Psoas muscle (tissue), 8 donors: ENCODE measurements at regions of chr1 and their contacts with region 1.

Region 1: GRCh38 chr1:113042285-113043143 is 30.5 kb upstream of the LRIG2 start:
- DNase-seq: peak; percentile 71 to 82
- ATAC-seq: peak; percentile 91 to 97 (median 94)
- H3K4me3 ChIP-seq: no peak overlapping the region
- H3K27ac ChIP-seq: no peak overlapping the region
- H3K4me1 ChIP-seq: peaks cover 7% of the 10 kb centered on the region
- H3K27me3 ChIP-seq: no peaks in the 10 kb centered on the region
- CTCF ChIP-seq: peak; percentile 66

Region 2: GRCh38 chr1:112803906-112804762 is 238.4 kb before region 1 on chr1:
- intact Hi-C with region 1: loop called in 1 of 2 experiments (anchors 10 kb)
- DNase-seq: peak; percentile 56 to 84
- ATAC-seq: peak; percentile 78 to 85 (median 83)
- H3K4me3 ChIP-seq: no peak overlapping the region
- H3K27ac ChIP-seq: no peak overlapping the region
- H3K4me1 ChIP-seq: peaks cover 8% of the 10 kb centered on the region
- H3K27me3 ChIP-seq: no peaks in the 10 kb centered on the region
- CTCF ChIP-seq: peak; percentile 75

Region 3: GRCh38 chr1:112882271-112882744 is 160.2 kb before region 1 on chr1:
- intact Hi-C with region 1: loop called (anchors 1 to 2 kb)
- DNase-seq: no peak
- ATAC-seq: peak in 1 of 4 donors; percentile 26
- H3K4me3 ChIP-seq: no peak overlapping the region
- H3K27ac ChIP-seq: no peak overlapping the region
- H3K4me1 ChIP-seq: no peaks in the 10 kb centered on the region
- H3K27me3 ChIP-seq: no peaks in the 10 kb centered on the region
- CTCF ChIP-seq: no peak

Region 4: DNA sequence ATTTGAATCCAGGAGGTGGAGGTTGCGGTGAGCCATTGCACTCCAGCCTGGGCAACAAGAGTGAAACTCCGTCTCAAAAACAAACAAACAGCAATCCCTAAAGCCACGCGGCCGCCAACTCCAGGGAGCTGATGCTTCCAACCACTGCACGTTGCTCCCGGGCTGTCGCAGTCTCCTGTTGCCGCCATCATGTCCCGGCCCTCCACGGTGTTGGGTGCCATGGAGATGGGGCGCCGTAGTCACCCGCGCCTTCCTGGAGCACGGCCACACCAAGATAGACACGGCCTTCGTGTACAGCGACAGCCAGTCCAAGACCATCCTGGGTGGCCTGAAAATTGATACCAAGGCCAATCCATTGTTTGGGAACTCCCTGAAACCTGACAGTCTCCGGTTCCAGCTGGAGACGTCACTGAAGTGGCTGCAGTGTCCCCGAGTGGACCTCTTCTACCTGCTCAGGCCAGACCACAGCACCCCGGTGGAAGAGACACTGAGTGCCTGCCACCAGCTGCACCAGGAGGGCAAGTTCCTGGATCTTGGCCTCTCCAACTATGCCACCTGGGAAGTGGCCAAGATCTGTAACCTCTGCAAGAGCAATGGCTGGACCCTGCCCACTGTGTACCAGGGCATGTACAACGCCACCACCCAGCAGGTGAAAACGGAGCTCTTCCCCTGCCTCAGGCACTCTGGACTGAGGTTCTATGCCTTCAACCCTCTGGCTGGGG is 119.1 kb before region 1 on chr1:
- intact Hi-C with region 1: no loop called
- DNase-seq: no peak
- ATAC-seq: peak; percentile 28 to 66 (median 54)
- H3K4me3 ChIP-seq: no peak overlapping the region
- H3K27ac ChIP-seq: peak overlapping the region; percentile 27
- H3K4me1 ChIP-seq: peaks cover 13% of the 10 kb centered on the region
- H3K27me3 ChIP-seq: no peaks in the 10 kb centered on the region
- CTCF ChIP-seq: no peak